ENCODE measurements at regions of chr1 and their contacts with region 1.

Region 1: GRCh38 chr1:8197493-8198282 is 120.2 kb upstream of the SLC45A1 start:
- DNase-seq: peak; percentile 97
- ATAC-seq: peak; percentile 74
- H3K4me3 ChIP-seq: no peak overlapping the region
- H3K27ac ChIP-seq: peak overlapping the region; percentile 91
- H3K4me1 ChIP-seq: peaks cover 87 to 99% of the 10 kb centered on the region in 2 experiments
- H3K27me3 ChIP-seq: no peaks in the 10 kb centered on the region
- CTCF ChIP-seq: no peak
- POLR2A ChIP-seq: peak; percentile 26
- RAD21 ChIP-seq: no peak

Region 2: GRCh38 chr1:8040586-8040985 is 157.1 kb before region 1 on chr1:
- CTCF ChIA-PET with region 1: no interaction called
- POLR2A ChIA-PET with region 1: interaction called, 32 read pairs
- RAD21 ChIA-PET with region 1: no interaction called
- intact Hi-C with region 1: no loop called
- DNase-seq: peak; percentile 99
- ATAC-seq: peak; percentile 81
- H3K4me3 ChIP-seq: no peak overlapping the region
- H3K27ac ChIP-seq: peak overlapping the region; percentile 96
- H3K4me1 ChIP-seq: peaks cover 79 to 89% of the 10 kb centered on the region in 2 experiments
- H3K27me3 ChIP-seq: no peaks in the 10 kb centered on the region
- CTCF ChIP-seq: no peak
- POLR2A ChIP-seq: no peak
- RAD21 ChIP-seq: peak; percentile 45

Region 3: DNA sequence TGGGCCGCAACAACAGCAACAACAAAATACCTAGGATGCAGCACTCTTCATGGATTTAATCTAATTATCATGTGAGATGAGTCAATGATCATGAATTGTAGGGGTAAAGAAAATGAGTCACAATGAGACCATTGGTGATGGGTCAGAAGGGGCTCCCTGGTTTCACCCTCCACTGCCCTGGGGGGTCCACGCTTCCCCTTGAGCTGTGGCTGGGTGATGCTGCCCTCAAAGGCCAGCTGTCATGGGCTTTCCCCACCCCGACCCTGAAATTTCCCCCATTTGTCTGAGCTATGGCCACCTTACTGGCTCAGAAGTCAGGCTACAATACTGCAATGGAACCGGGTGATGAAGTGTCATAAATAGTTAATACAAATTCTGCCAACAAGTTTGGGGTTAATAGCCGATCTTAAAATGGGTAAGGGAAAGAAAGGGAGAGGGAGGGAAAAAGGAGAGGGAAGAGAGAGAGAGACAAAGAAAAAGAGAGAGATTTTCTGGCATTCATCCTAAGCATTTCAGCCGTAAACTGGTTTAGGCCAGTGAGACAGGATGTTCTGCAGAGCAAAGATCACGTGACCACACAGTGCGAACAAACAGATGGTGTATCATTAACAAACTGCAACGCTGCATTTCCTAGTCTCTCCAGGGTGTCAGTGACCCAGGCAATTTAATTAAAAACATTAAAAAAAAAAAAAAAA is 28.2 kb before region 1 on chr1:
- CTCF ChIA-PET with region 1: no interaction called
- POLR2A ChIA-PET with region 1: interaction called, 93 read pairs
- RAD21 ChIA-PET with region 1: interaction called in 1 of 2 experiments, 8 read pairs
- intact Hi-C with region 1: no loop called
- DNase-seq: no peak
- ATAC-seq: peak; percentile 26; the same call in 1 of the 2 replicates
- H3K4me3 ChIP-seq: no peak overlapping the region
- H3K27ac ChIP-seq: peak overlapping the region; percentile 96
- H3K4me1 ChIP-seq: peaks cover 71 to 94% of the 10 kb centered on the region in 2 experiments
- H3K27me3 ChIP-seq: no peaks in the 10 kb centered on the region
- CTCF ChIP-seq: no peak
- POLR2A ChIP-seq: peak; percentile 26
- RAD21 ChIP-seq: no peak

Region 4: GRCh38 chr1:8211589-8212442 is 14.1 kb after region 1 on chr1:
- CTCF ChIA-PET with region 1: no interaction called
- POLR2A ChIA-PET with region 1: interaction called, 34 read pairs
- RAD21 ChIA-PET with region 1: no interaction called
- intact Hi-C with region 1: no loop called
- DNase-seq: peak; percentile 96
- ATAC-seq: peak; percentile 81
- H3K4me3 ChIP-seq: peak overlapping the region; percentile 2 to 33; a peak in 3 of 4 replicates
- H3K27ac ChIP-seq: peak overlapping the region; percentile 94
- H3K4me1 ChIP-seq: peaks cover 54 to 91% of the 10 kb centered on the region in 2 experiments
- H3K27me3 ChIP-seq: no peaks in the 10 kb centered on the region
- CTCF ChIP-seq: no peak
- POLR2A ChIP-seq: peak; percentile 24
- RAD21 ChIP-seq: no peak

Region 5: DNA sequence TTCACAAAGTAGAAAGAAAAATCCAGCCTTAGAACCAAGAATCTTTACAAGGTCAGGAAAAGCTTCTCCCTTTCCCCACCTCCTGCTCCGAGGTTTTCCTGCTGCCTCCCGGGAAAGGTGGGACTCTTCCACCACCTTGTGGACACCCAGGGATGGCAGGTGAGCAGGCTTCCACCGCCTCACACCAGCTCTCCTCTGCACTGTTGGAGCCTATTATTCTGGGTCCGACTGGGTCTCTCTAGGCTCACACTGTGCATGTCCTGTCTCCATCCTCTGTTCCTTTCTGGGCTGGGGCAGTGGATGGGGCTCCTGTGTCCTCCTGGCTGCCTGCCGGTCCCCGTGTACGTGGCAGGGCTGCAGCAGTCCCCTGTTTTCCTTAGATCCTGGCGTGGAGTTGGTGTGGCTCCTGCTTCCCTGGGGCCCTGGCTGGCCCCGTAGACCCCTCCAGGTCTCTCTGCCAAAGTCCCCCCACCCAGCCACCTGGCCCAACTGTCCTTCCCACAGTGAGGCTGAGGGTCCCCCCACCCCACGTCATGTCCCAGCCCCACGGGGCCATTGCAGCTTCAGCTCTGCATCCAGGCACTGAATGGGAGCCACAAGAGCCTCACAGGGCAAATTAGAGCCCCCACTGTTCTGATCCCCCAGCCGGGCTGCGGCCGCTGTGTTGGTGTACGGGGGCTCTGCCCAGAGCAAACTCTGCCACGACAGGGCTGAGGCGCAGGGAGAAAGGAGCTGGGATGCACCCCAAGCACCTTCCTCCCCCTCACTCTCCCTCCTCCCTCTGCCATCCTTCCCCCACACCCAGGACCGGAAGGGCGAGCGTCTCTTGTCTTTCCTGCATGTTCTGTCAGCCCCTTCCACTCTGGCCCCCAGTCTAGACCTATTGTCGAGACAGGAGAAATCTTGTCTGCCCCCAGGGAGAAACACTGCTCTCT is 116.9 kb after region 1 on chr1:
- CTCF ChIA-PET with region 1: interaction called, 9 read pairs
- POLR2A ChIA-PET with region 1: interaction called, 21 read pairs
- RAD21 ChIA-PET with region 1: interaction called in 1 of 2 experiments, 4 read pairs
- intact Hi-C with region 1: loop called (anchors 1 kb)
- DNase-seq: peak; percentile 48
- ATAC-seq: peak; percentile 75
- H3K4me3 ChIP-seq: no peak overlapping the region
- H3K27ac ChIP-seq: peak overlapping the region; percentile 50; the same call in 1 of the 2 replicates
- H3K4me1 ChIP-seq: peaks cover 29 to 60% of the 10 kb centered on the region in 2 experiments
- H3K27me3 ChIP-seq: no peaks in the 10 kb centered on the region
- CTCF ChIP-seq: peak in 2 of 3 experiments; percentile 92 to 94; a peak in 4 of 6 replicates
- POLR2A ChIP-seq: no peak
- RAD21 ChIP-seq: no peak

Measured in HCT116 (cell line).